ENCODE measurements at regions of chr15 and their contacts with region 1.

Region 1: GRCh38 chr15:82064824-82065223 is 19.0 kb upstream of the MEX3B start:
- DNase-seq: no peak
- ATAC-seq: no peak
- H3K4me3 ChIP-seq: no peak overlapping the region
- H3K4me3 Mint-ChIP-seq: no peak overlapping the region
- H3K27ac ChIP-seq: no peak overlapping the region
- H3K27ac Mint-ChIP-seq: no peak overlapping the region
- H3K4me1 ChIP-seq: no peaks in the 10 kb centered on the region
- H3K4me1 Mint-ChIP-seq: no peaks in the 10 kb centered on the region
- H3K27me3 ChIP-seq: no peaks in the 10 kb centered on the region
- H3K27me3 Mint-ChIP-seq: peaks cover 23 to 49% of the 10 kb centered on the region in 2 donors
- CTCF ChIP-seq: no peak

Region 2: DNA sequence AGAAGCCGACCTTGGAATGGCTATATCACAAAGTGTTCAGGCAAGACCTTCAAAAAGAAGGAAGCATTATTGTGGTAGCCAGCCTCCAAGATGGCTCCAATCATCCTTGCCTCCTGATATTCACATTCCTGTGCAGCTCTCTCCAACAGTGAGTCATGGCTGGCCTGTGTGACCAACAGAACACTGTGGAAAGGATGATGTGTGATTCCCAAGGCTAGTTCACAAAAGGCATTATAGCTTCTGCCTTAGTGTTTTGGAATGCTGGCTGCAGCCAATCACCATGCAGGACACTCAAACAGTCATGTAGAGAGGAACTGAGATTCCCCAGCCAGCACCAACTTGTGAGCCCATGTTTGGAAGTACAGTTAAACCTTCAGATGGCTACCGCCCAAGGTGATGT is 95.1 kb after region 1 on chr15:
- intact Hi-C with region 1: loop called (anchors 5 kb)
- DNase-seq: no peak
- ATAC-seq: no peak
- H3K4me3 ChIP-seq: no peak overlapping the region
- H3K4me3 Mint-ChIP-seq: no peak overlapping the region
- H3K27ac ChIP-seq: no peak overlapping the region
- H3K27ac Mint-ChIP-seq: no peak overlapping the region
- H3K4me1 ChIP-seq: no peaks in the 10 kb centered on the region
- H3K4me1 Mint-ChIP-seq: no peaks in the 10 kb centered on the region
- H3K27me3 ChIP-seq: no peaks in the 10 kb centered on the region
- H3K27me3 Mint-ChIP-seq: no peaks in the 10 kb centered on the region
- CTCF ChIP-seq: no peak

Measured in natural killer cell (primary cell).